ENCODE measurements at regions of chr1 and their contacts with region 1.

Region 1: GRCh38 chr1:173824331-173825081 is at the starts of genes CENPL and DARS2:
- DNase-seq: peak; percentile 99
- H3K4me3 ChIP-seq: peak within 1 kb of the TSS; percentile 73
- H3K27ac ChIP-seq: peak within 1 kb of the TSS; percentile 94
- H3K4me1 ChIP-seq: peaks cover 13% of the 10 kb centered on the region
- H3K27me3 ChIP-seq: no peaks in the 10 kb centered on the region
- CTCF ChIP-seq: no peak
- total RNA-seq, gene CENPL: 34.3 and 35.7 TPM in 2 replicates
- total RNA-seq, gene DARS2: 41.6 and 43.4 TPM in 2 replicates

Region 2: DNA sequence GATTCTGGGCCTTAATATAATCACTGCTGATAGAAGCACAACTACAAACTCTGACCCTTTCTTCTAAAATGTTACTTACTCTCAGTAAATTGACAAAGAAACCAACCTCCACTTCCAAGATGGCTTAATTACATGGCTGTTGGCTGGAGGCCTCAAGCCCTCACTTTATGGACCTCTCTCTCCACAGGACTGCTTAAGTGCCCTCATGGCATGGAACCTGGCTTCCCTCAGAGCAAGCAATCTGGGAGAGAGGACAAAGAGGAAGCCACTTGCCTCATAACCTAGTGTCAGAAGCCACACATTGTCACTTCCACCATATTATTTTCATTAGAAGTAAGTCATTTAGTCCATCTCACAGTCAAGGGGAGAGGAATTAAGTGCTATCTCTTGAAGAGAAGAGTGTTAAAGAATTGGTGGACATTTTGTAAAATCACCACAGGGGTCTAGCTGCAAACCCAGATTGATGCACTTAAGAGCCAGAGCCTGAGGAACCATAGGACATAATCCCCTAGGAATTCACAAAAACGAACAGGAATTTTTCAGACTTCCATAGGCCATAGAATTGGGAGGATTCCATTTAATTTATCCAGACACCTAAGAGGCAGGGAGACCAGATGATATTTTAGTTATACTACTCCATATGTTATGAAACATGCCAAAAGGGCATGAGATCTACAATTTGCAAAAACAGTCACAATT is 519.8 kb before region 1 on chr1:
- CTCF ChIA-PET with region 1: no interaction called
- POLR2A ChIA-PET with region 1: no interaction called
- intact Hi-C with region 1: no loop called
- DNase-seq: no peak
- H3K4me3 ChIP-seq: no peak overlapping the region
- H3K27ac ChIP-seq: no peak overlapping the region
- H3K4me1 ChIP-seq: no peaks in the 10 kb centered on the region
- H3K27me3 ChIP-seq: no peaks in the 10 kb centered on the region
- CTCF ChIP-seq: no peak

Region 3: GRCh38 chr1:173476664-173477285 is 347.7 kb before region 1 on chr1:
- CTCF ChIA-PET with region 1: no interaction called
- POLR2A ChIA-PET with region 1: no interaction called
- intact Hi-C with region 1: loop called (anchors 2 kb)
- DNase-seq: peak; percentile 91
- H3K4me3 ChIP-seq: peak overlapping the region; percentile 91
- H3K27ac ChIP-seq: peak overlapping the region; percentile 61
- H3K4me1 ChIP-seq: peaks cover 21% of the 10 kb centered on the region
- H3K27me3 ChIP-seq: no peaks in the 10 kb centered on the region
- CTCF ChIP-seq: no peak

Region 4: DNA sequence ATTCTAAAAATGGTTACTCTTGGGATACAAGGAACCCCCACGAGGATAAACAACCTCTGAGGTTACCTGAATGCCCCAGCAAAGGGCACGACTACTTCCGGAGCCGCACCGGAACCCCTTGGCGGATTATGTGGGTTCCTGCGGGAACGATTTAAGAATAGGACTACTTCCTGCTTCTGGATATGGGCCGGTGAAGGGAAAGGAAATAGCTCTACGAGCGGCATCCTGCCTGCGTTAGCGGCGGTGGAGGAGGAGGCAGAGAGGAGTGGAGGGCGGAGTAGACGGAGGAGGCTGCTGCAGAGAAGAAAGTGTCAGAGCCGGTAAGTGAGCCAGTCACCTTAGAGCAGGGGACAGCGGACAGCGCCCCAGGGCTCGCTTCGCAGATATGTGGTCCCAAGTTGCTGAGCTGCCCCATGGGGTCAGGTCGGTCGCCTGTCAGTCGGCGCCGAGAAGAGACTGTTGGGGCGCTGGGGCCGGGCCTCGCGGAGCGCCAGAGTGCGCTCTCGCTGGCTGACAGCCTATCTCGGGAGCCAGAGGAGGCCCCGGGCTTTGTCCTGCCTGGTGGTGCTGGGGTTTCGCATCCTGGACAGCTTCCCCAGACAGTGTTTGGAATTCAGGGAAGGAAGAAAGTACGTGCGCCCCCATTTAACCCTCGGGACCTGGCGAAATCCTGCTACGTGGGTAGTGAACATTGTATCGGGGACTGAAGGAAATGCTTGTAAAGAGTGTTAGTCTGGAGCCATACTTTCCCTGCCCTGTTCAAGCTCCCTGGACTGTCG is 109.6 kb before region 1 on chr1 and contains the start of gene KLHL20:
- CTCF ChIA-PET with region 1: no interaction called
- POLR2A ChIA-PET with region 1: no interaction called
- intact Hi-C with region 1: loop called (anchors 10 kb)
- DNase-seq: peak; percentile 94
- H3K4me3 ChIP-seq: peak within 1 kb of the TSS; percentile 70
- H3K27ac ChIP-seq: peak within 1 kb of the TSS; percentile 79
- H3K4me1 ChIP-seq: peaks cover 10% of the 10 kb centered on the region
- H3K27me3 ChIP-seq: peaks cover 10% of the 10 kb centered on the region
- CTCF ChIP-seq: no peak
- total RNA-seq, gene KLHL20: 17.7 and 18.4 TPM in 2 replicates

Region 5: DNA sequence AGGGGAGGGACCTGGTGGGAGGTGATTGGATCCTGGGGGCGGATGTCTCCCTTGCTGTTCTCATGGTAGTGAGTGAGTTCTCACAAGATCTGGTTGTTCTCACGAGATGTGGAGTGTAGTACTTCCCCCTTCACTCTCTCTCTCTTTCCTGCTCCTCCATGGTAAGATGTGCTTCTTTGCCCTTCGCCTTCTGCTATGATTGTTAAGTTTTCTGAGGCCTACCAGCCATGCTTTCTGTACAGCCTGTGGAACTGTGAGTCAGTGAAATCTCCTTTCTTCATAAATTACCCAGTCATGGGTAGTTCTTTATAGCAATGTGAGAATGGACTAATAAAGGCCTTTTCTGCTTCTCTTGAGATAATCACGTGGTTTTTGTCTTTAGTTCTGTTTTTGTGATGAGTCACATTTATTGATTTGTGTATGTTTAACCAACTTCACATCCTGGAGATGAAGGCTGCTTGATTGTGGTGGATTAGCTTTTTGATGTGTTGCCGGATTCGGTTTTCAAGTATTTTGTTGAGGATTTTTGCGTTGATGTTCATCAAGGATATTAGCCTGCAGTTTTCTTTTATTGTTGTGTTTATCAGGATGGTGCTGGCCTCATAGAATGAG is 380.3 kb after region 1 on chr1:
- CTCF ChIA-PET with region 1: no interaction called
- POLR2A ChIA-PET with region 1: no interaction called
- intact Hi-C with region 1: no loop called
- DNase-seq: no peak
- H3K4me3 ChIP-seq: no peak overlapping the region
- H3K27ac ChIP-seq: no peak overlapping the region
- H3K4me1 ChIP-seq: no peaks in the 10 kb centered on the region
- H3K27me3 ChIP-seq: no peaks in the 10 kb centered on the region
- CTCF ChIP-seq: no peak

Measured in A673 (cell line).